Caco-2 (cell line): ENCODE measurements at regions of chr19 and their contacts with region 1.

Region 1: DNA sequence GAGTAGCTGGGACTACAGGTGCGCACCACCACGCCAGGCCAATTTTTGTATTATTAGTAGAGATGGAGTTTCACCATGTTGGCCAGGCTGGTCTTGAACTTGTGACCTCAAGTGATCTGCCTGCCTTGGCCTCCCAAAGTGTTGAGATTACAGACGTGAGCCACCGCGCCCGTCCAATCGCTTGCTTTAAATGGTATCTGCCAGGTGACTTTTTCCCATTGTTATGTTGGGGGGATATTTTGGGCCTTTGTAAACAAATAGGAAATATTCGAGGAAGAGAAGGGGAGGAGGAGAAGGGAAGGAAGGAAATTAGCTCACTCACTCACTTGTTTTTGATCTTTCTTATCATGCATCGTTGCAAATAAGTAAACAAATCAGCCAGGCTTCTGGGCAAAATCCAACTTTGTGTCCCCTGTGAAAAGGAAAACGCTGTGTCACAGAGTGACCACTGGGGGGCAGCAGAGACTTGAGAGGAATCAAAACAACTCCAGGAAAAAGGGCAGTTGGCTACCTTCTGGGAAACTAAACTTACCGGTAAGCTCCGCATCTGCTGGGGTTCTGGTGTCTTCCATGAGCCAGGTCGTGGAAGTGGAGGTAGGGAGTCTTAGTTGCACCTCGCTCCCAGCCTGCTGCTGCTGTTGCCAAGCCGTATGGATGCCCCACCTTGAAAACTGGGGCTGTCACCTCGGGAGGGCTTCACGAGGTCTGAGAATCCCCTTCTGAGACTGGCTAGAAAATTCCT is 9.3 kb upstream of the RANBP3 start:
- DNase-seq: peak; percentile 84 to 85
- H3K4me3 ChIP-seq: no peak overlapping the region
- H3K4me3 Mint-ChIP-seq: peak overlapping the region; percentile 39
- H3K27ac Mint-ChIP-seq: peak overlapping the region; percentile 11
- H3K4me1 ChIP-seq: peaks cover 7% of the 10 kb centered on the region
- H3K4me1 Mint-ChIP-seq: peaks cover 15% of the 10 kb centered on the region
- H3K27me3 ChIP-seq: no peaks in the 10 kb centered on the region
- H3K27me3 Mint-ChIP-seq: no peaks in the 10 kb centered on the region
- CTCF ChIP-seq: peak; percentile 78 to 85

Region 2: GRCh38 chr19:6021878-6022569 is 34.8 kb after region 1 on chr19:
- CTCF ChIA-PET with region 1: interaction called, 44 read pairs
- POLR2A ChIA-PET with region 1: no interaction called
- intact Hi-C with region 1: loop called (anchors 1 kb)
- DNase-seq: peak; percentile 65
- H3K4me3 ChIP-seq: no peak overlapping the region
- H3K4me3 Mint-ChIP-seq: no peak overlapping the region
- H3K27ac Mint-ChIP-seq: no peak overlapping the region
- H3K4me1 ChIP-seq: peaks cover 3% of the 10 kb centered on the region
- H3K4me1 Mint-ChIP-seq: no peaks in the 10 kb centered on the region
- H3K27me3 ChIP-seq: no peaks in the 10 kb centered on the region
- H3K27me3 Mint-ChIP-seq: no peaks in the 10 kb centered on the region
- CTCF ChIP-seq: peak; percentile 63 to 67

Region 3: GRCh38 chr19:6048808-6049405 is 61.7 kb after region 1 on chr19:
- CTCF ChIA-PET with region 1: interaction called, 22 read pairs
- POLR2A ChIA-PET with region 1: no interaction called
- intact Hi-C with region 1: loop called (anchors 1 kb)
- DNase-seq: peak; percentile 69 to 80
- H3K4me3 ChIP-seq: no peak overlapping the region
- H3K4me3 Mint-ChIP-seq: peak overlapping the region; percentile 15
- H3K27ac Mint-ChIP-seq: no peak overlapping the region
- H3K4me1 ChIP-seq: peaks cover 9% of the 10 kb centered on the region; the same call in 1 of the 2 replicates
- H3K4me1 Mint-ChIP-seq: peaks cover 6% of the 10 kb centered on the region
- H3K27me3 ChIP-seq: no peaks in the 10 kb centered on the region
- H3K27me3 Mint-ChIP-seq: no peaks in the 10 kb centered on the region
- CTCF ChIP-seq: peak; percentile 83 to 89

Region 4: DNA sequence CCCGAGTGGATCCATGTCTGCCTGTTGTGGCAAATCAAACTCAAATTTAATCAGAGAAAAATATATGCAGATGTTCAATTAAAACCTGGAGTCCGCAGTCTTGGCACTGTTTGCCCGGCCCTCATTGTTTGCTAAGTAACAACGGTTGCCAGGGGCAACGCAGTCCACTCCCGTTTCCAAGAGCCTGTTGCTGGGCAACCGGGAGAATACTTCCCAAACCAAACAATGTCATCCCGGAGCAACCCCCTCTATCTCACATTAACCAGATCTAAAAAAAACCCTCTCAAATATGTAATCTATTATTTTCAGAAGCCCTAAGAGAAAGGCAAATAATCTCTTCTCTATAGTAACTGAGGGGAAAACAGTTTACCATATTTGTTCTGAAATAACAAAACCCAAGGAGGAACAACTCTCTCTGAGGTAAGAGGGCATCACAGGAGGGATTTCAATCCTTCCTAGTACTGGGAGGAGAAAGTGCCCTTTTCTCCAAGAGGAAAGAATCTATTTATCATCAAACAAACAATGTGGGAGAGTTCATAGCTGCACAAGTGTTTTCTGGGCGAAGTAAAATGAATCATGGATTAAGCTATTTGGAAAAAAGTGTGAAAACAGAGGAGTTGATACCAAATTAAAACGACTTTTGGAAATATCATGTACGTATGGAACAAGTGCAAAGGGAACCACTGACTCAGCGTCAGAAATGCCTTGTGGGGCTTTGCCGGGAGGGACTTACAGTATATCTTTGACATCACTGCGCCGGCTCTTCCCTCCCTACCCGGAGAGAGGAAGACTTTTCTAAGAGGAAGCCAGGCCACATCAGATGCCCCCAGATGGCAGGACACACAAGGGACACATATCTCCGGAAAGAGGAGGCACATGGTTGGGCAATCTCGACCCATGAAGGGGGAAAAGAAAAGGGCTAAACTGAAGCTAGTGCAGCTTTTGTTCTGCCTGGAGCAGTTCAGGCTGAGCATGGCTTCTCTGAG is 79.7 kb after region 1 on chr19:
- CTCF ChIA-PET with region 1: no interaction called
- POLR2A ChIA-PET with region 1: no interaction called
- intact Hi-C with region 1: no loop called
- DNase-seq: peak; percentile 89
- H3K4me3 ChIP-seq: no peak overlapping the region
- H3K4me3 Mint-ChIP-seq: peak overlapping the region; percentile 55
- H3K27ac Mint-ChIP-seq: peak overlapping the region; percentile 89
- H3K4me1 ChIP-seq: peaks cover 26% of the 10 kb centered on the region
- H3K4me1 Mint-ChIP-seq: peaks cover 24% of the 10 kb centered on the region
- H3K27me3 ChIP-seq: no peaks in the 10 kb centered on the region
- H3K27me3 Mint-ChIP-seq: no peaks in the 10 kb centered on the region
- CTCF ChIP-seq: no peak